KBM-7 (cell line): ENCODE measurements at regions of chr10 and their contacts with region 1.

Region 1: DNA sequence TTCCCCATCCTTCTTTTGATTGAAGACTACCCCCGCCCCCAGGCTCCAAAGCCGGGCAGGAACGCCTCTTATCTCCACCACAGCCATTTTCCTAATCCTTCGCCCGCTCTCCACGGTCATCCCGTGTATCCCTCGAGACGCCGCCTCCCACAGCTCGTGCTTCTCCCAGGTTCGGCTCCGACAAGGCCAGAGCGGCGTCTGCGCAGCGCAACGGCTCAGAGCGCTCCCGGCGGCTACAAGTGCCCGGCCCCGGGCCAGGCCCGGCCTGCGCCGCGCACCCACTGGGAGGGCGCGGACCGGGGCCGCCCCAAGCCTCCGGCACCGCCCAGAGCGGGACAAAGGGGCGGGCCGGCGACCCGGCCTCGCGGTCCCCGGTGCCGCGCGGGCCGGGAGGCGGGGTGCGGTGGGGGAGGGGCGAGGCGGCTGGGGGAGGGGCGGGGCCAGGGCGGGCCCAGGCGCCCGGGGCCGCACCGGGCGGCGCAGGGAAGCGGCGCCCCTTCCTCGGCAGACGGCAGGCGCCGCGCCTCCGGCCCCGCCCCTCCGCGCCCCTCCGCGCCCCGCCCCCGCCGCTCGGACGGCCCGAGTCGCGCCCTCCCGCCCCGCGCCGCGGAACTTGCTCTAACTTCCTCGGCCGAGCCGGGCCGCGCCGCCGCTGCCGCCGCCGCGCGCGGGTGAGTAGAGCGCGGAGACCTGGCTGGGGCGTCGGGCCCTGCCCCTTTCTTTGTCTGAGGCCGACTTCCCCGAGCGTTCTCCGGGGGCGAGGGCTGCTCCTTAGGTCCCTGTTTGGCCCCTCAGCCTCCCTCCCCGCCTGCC is at the start of gene TSPAN14:
- DNase-seq: peak; percentile 60

Region 2: DNA sequence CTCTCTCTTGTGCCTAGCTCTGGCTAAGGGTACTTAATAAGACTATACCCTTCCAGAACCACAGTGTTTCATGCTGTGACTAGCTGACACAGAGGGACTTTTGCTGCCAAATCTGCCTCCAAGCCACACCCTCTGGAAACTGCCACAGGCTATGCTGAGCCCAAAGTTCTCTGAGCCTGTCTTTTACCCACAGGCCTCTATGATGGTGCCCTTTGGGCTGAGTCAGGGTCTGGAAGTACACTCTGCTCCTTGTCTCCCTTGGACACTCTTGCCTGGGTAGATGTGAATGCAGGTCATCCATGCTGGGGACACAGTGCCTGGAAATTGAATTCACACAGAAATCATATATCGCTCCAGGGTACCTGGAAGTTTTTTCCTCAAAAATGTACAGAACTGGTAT is 119.9 kb before region 1 on chr10:
- in situ Hi-C with region 1: no loop called
- DNase-seq: no peak

Region 3: GRCh38 chr10:80509403-80510161 is 55.7 kb after region 1 on chr10:
- in situ Hi-C with region 1: loop called (anchors 5 kb)
- DNase-seq: no peak